ENCODE measurements at regions of chr19 and their contacts with region 1.

Region 1: DNA sequence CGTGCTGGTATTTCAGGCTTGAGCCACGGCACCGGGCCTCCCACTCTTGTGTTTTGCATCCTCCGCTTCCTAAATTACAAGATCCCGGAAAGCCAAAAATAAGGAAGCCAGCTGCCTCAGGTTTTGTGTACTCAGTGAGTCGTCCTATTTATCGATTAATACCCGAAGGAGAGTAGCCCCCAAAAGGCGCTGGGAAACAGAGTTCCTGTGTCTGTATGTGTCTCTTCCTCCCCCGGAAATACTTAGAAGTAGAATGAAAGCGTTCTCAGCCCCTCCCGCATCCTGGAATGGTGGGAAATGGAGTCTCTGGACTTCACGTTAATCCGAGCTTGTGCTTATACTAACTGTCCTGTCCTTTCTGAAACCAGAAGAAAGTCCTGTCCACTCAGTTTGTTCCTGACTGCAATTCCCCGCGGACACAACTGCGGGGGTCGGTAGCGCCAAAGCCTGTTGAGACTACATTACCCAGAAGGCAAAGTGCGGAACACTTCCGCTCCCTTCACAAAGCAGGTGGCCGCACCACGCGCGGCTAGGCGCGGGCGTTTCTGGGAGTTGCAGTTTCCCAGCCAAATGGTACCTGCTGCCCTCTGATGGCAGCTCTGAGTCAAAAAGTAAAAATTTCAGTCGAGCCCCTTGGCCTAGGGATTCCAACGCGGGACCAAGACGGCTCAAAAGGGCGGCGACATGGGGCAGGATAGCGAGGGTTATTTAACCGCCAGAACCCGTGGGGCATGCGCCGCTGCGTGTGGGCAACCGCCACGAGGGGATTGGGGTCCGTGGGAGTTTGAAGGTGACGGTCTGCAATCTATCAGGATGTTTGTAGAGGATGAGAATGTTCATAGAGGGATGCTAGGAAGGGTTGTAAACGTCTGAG is 2.2 kb upstream of the GSK3A start:
- DNase-seq: peak; percentile 83
- H3K4me3 ChIP-seq: peak overlapping the region; percentile 83 to 84
- H3K27ac ChIP-seq: peak overlapping the region; percentile 83 to 95
- H3K4me1 ChIP-seq: peaks cover 19 to 30% of the 10 kb centered on the region in 2 experiments
- H3K27me3 ChIP-seq: no peaks in the 10 kb centered on the region
- CTCF ChIP-seq: peak; percentile 68
- EP300 ChIP-seq: peak in 1 of 2 experiments; percentile 17; a peak in 1 of 4 replicates
- RAD21 ChIP-seq: peak; percentile 42; the same call in 1 of the 2 replicates

Region 2: DNA sequence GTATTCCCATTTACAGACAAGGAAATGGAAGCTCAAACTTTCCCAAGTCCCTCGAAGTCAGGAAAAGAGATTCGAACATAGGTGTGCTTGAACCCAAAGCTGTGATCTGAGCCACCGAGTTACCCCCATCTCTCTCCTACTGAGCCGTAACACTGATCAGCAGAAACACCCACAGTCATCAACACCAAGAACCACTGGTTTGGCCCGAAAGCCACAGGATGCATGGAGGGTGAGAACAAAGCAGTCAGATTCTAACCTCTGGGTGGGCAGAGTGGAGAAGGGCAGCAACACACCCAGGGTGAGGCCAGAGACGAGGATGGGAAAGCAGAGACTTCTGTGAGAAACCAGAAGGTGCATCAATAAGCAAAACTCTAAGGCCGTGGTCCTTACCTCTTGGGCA is 84.6 kb before region 1 on chr19:
- CTCF ChIA-PET with region 1: no interaction called
- POLR2A ChIA-PET with region 1: no interaction called
- DNase-seq: no peak
- H3K4me3 ChIP-seq: no peak overlapping the region
- H3K27ac ChIP-seq: no peak overlapping the region
- H3K4me1 ChIP-seq: peaks cover 0 to 2% of the 10 kb centered on the region in 2 experiments; a peak in 1 of 4 replicates
- H3K27me3 ChIP-seq: peaks cover 45% of the 10 kb centered on the region
- CTCF ChIP-seq: no peak
- EP300 ChIP-seq: no peak
- RAD21 ChIP-seq: no peak

Region 3: GRCh38 chr19:42233106-42233505 is 11.5 kb before region 1 on chr19:
- CTCF ChIA-PET with region 1: interaction called, 21 read pairs
- POLR2A ChIA-PET with region 1: interaction called, 8 read pairs
- DNase-seq: no peak
- H3K4me3 ChIP-seq: no peak overlapping the region
- H3K27ac ChIP-seq: no peak overlapping the region
- H3K4me1 ChIP-seq: no peaks in the 10 kb centered on the region; a peak in 1 of 4 replicates
- H3K27me3 ChIP-seq: no peaks in the 10 kb centered on the region
- CTCF ChIP-seq: no peak
- EP300 ChIP-seq: no peak
- RAD21 ChIP-seq: no peak

Region 4: GRCh38 chr19:42283143-42284065 is 38.8 kb after region 1 on chr19:
- CTCF ChIA-PET with region 1: interaction called, 205 read pairs
- POLR2A ChIA-PET with region 1: interaction called, 35 read pairs
- DNase-seq: peak; percentile 94
- H3K4me3 ChIP-seq: peak overlapping the region; percentile 58 to 60
- H3K27ac ChIP-seq: peak overlapping the region; percentile 93 to 96
- H3K4me1 ChIP-seq: peaks cover 45 to 60% of the 10 kb centered on the region in 2 experiments
- H3K27me3 ChIP-seq: no peaks in the 10 kb centered on the region
- CTCF ChIP-seq: no peak
- EP300 ChIP-seq: no peak
- RAD21 ChIP-seq: no peak

Region 5: GRCh38 chr19:42290523-42291438 is 46.2 kb after region 1 on chr19:
- CTCF ChIA-PET with region 1: interaction called, 51 read pairs
- POLR2A ChIA-PET with region 1: interaction called, 4 read pairs
- DNase-seq: peak; percentile 88
- H3K4me3 ChIP-seq: no peak overlapping the region
- H3K27ac ChIP-seq: no peak overlapping the region; a peak in 1 of 4 replicates
- H3K4me1 ChIP-seq: peaks cover 6 to 13% of the 10 kb centered on the region in 2 experiments; a peak in 2 of 4 replicates
- H3K27me3 ChIP-seq: no peaks in the 10 kb centered on the region
- CTCF ChIP-seq: peak; percentile 67
- EP300 ChIP-seq: no peak
- RAD21 ChIP-seq: peak; percentile 56

Region 6: GRCh38 chr19:42295831-42296525 is 51.4 kb after region 1 on chr19:
- CTCF ChIA-PET with region 1: interaction called, 51 read pairs
- POLR2A ChIA-PET with region 1: no interaction called
- DNase-seq: peak; percentile 88
- H3K4me3 ChIP-seq: no peak overlapping the region; a peak in 1 of 4 replicates
- H3K27ac ChIP-seq: peak overlapping the region in 1 of 2 experiments; percentile 4; a peak in 2 of 4 replicates
- H3K4me1 ChIP-seq: no peaks in the 10 kb centered on the region; a peak in 2 of 4 replicates
- H3K27me3 ChIP-seq: no peaks in the 10 kb centered on the region
- CTCF ChIP-seq: peak; percentile 93
- EP300 ChIP-seq: no peak
- RAD21 ChIP-seq: peak; percentile 67

Measured in SK-N-SH (cell line).